Activated CD4-positive, alpha-beta T cell treated with anti-CD3 and anti-CD28 coated beads, Interleukin-2, amount 10 ng/mL, durations not matched to agents 24 days and 14 days (primary cell): ENCODE measurements at regions of chrX and their contacts with region 1.

Region 1: DNA sequence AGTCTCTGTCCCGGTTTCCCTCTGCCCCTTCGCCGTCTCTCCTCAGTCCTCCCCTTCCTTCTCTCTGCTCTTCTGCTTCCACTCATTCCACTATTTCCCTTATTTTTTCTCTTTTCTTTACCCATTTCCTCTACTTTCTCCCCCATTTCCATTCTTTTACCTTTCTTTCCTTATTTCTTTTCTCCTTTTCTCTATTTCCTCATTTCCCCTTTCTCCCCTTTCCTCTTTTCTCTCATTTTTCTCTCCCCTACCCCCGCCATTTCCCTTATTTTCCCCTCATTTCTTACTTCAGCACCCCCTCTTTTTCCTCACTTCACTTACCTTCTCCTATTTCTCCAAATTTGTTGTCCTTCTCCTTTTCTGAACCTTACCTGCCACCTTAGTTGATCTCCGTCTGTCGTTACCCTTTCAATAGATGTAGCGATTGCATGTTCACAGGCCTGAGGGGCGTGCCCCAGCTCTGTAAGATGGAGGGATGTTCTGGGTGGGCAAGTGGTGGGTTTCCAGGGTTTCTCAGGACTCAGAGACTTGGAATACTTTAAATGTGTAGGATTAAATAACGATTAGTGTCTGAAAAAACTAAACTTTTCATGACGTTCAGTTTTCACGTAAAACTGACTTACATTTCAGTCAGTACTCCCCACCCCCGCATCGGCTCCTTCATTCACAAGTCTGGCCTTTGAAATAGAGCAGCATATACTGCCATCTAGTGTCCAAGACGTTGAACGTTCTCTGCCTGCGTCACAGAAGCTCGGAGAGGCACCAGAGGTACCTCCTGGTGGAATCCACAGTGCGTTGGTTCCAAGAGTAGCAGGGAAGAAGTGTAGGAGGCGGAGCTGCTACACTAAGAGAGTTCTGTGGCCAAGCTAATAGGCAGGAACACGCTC is 641 bp upstream of the NCBP2L start:
- DNase-seq: peak; percentile 91
- H3K4me3 Mint-ChIP-seq: peak overlapping the region; percentile 89
- H3K27ac Mint-ChIP-seq: peak overlapping the region; percentile 74
- H3K4me1 Mint-ChIP-seq: peaks cover 12% of the 10 kb centered on the region
- H3K27me3 Mint-ChIP-seq: peaks cover 12% of the 10 kb centered on the region

Region 2: DNA sequence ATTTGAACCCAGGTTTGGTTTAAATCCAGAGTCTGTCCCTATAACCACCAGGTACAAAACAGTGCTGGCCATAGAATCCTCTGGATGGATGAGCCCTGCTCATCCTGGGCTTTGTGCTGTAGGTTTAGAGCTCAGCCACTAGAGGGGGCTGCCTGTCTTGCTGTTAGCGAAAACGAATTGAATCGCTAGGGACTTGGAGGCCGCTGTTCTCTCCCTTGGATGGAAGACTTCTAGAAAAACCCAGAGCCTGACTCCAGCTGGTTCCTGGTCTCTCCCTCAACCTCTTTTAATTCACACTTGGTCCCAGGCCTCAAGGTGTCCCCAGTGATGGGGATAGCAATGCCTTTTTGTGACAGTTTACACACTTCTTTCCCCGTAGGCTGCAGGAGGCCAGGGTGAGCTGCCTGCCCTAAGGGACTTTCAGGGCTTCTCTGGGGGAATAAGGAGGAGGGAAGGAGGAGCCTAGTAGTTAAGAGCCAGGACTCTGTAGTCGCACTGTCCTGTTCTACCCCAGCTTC is 882.4 kb before region 1 on chrX:
- intact Hi-C with region 1: loop called (anchors 10 kb)
- DNase-seq: peak; percentile 79
- H3K4me3 Mint-ChIP-seq: no peak overlapping the region
- H3K27ac Mint-ChIP-seq: no peak overlapping the region
- H3K4me1 Mint-ChIP-seq: no peaks in the 10 kb centered on the region
- H3K27me3 Mint-ChIP-seq: no peaks in the 10 kb centered on the region

Region 3: GRCh38 chrX:107480272-107480671 is 296.6 kb before region 1 on chrX:
- intact Hi-C with region 1: no loop called
- DNase-seq: no peak
- H3K4me3 Mint-ChIP-seq: no peak overlapping the region
- H3K27ac Mint-ChIP-seq: no peak overlapping the region
- H3K4me1 Mint-ChIP-seq: no peaks in the 10 kb centered on the region
- H3K27me3 Mint-ChIP-seq: peaks cover 3% of the 10 kb centered on the region

Region 4: DNA sequence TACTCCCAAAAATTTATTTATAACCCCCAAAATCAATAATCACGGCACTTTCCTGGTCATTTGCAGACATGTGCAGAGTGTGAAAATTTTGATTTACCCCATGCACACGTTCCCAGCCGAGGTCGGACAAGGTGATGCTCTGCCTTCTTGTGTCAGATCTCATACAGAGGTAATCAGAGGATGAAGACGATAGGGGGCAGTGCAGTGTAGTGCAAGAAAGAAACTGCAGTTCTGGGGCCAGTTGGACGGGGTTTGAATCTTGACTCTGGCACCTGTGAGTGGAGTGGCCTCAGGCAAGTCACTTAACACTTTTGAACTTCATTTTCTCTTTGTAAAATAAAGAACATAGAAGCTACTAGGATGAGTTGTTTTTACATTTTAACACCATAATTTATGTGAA is 239.1 kb before region 1 on chrX:
- intact Hi-C with region 1: loop called (anchors 2 kb)
- DNase-seq: peak; percentile 75
- H3K4me3 Mint-ChIP-seq: no peak overlapping the region
- H3K27ac Mint-ChIP-seq: no peak overlapping the region
- H3K4me1 Mint-ChIP-seq: no peaks in the 10 kb centered on the region
- H3K27me3 Mint-ChIP-seq: peaks cover 11% of the 10 kb centered on the region

Region 5: GRCh38 chrX:107672955-107673378 is 103.9 kb before region 1 on chrX:
- intact Hi-C with region 1: loop called (anchors 1 kb)
- DNase-seq: peak; percentile 93
- H3K4me3 Mint-ChIP-seq: peak overlapping the region; percentile 65
- H3K27ac Mint-ChIP-seq: peak overlapping the region; percentile 94
- H3K4me1 Mint-ChIP-seq: peaks cover 39% of the 10 kb centered on the region
- H3K27me3 Mint-ChIP-seq: no peaks in the 10 kb centered on the region

Region 6: GRCh38 chrX:107741404-107741790 is 35.5 kb before region 1 on chrX:
- intact Hi-C with region 1: loop called (anchors 5 kb)
- DNase-seq: no peak
- H3K4me3 Mint-ChIP-seq: peak overlapping the region; percentile 89
- H3K27ac Mint-ChIP-seq: peak overlapping the region; percentile 99
- H3K4me1 Mint-ChIP-seq: peaks cover 15% of the 10 kb centered on the region
- H3K27me3 Mint-ChIP-seq: peaks cover 2% of the 10 kb centered on the region

Region 7: GRCh38 chrX:107857799-107858198 is 80.9 kb after region 1 on chrX:
- intact Hi-C with region 1: no loop called
- DNase-seq: no peak
- H3K4me3 Mint-ChIP-seq: no peak overlapping the region
- H3K27ac Mint-ChIP-seq: no peak overlapping the region
- H3K4me1 Mint-ChIP-seq: peaks cover 2% of the 10 kb centered on the region
- H3K27me3 Mint-ChIP-seq: no peaks in the 10 kb centered on the region